ENCODE measurements at regions of chr9 and their contacts with region 1.

Region 1: DNA sequence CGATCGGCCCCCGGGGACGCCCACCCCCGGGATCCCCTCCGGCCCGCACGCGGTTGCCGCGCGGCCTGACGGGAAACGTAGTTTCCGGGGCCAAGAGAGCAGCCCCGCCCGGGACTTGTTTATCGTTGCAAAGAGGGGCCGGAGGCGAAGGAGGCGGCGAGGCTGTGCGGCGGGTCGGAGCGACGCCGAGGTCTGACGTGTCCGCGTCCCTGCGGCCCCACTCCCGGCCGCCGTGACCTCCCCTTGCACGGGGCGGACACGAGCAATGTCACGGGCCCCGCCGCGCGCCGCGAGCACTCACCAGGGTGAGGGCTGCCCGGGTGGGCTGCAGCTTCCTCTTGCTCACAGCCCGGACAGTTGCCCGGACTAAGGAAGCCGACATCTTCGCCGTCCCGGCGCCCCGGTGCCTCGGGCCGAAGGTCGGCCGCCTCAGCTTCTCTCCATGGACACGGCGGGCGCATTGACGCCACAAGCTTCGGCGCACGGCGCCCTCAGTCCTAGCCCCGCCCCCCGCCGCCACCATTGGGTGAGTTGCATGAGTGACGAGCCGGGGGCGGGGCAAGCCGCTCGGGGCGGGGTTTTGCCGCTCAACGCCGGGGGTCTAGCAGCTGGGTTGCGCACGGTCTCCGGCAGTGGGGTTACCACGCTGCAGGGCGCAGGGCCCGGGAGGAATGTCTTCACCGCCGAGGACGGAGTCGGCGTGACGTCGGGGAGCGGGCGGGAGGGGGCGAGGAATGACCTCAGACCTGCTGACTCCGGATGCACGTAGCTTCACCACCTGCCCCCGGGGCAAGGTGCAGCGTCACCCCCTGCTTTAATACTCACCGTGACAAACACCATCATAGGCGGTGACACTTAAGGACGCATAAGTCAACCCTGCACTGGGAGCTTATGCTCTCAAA is at the start of gene ISCA1:
- DNase-seq: peak; percentile 87
- ATAC-seq: peak; percentile 94
- H3K4me3 ChIP-seq: peak within 1 kb of the TSS; percentile 92
- H3K27ac ChIP-seq: peak within 1 kb of the TSS; percentile 88
- H3K4me1 ChIP-seq: peaks cover 4% of the 10 kb centered on the region
- H3K27me3 ChIP-seq: no peaks in the 10 kb centered on the region
- CTCF ChIP-seq: no peak
- POLR2A ChIP-seq: peak; percentile 96
- RAD21 ChIP-seq: no peak
- total RNA-seq, gene ISCA1: 14.7 and 26.4 TPM in 2 replicates

Region 2: DNA sequence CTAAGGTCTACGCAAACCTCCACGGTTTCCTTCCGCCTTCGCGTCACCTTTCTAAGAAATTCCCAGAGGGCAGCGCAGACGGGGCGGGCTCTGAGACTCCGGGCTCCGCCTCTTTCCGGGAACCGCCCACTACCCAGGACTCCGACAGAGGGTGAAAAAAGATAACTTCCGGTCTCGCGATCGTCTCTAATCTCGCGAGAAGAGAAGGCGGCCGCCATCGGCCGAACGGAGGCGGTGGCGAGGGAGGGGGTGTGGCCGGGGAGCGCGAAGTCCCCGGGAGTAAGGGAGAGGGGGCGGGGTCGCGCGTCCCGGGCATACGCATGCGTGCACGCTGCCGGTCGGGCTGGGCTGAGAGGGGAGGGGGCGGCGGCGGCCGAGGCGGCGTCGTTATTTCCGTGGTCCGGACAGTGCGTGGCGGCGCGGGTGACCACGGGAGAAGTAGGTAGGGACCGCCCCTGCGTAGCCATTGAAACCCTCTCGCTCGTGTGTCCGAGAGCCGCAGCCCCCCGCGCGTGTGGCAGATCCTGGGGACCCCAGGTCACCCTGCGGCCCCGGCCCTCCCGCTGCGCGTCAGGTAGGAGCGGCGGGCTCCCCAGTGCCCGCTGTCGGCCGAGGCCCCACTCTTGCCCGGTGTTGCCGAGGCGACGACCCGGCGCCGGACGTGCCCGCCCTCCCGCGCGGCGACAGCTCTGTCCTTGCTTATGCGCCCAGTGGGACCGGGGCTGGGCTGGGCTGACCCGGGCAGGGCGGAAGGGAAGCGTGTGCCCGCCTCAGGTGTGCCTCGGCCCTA is 341.3 kb before region 1 on chr9 and contains the start of gene NAA35:
- CTCF ChIA-PET with region 1: no interaction called
- POLR2A ChIA-PET with region 1: no interaction called
- dilution Hi-C with region 1: no loop called
- in situ Hi-C with region 1: no loop called
- intact Hi-C with region 1: loop called (anchors 5 kb)
- DNase-seq: peak; percentile 97
- ATAC-seq: peak; percentile 95
- H3K4me3 ChIP-seq: peak within 1 kb of the TSS; percentile 83
- H3K27ac ChIP-seq: peak within 1 kb of the TSS; percentile 66
- H3K4me1 ChIP-seq: no peaks in the 10 kb centered on the region
- H3K27me3 ChIP-seq: no peaks in the 10 kb centered on the region
- CTCF ChIP-seq: no peak
- POLR2A ChIP-seq: 0 out of 2 replicates have a peak, but pooled peaks have one; percentile 59
- RAD21 ChIP-seq: no peak
- total RNA-seq, gene NAA35: 16.5 and 23.9 TPM in 2 replicates

Region 3: GRCh38 chr9:86230858-86231257 is 51.5 kb before region 1 on chr9:
- CTCF ChIA-PET with region 1: no interaction called
- POLR2A ChIA-PET with region 1: no interaction called
- dilution Hi-C with region 1: no loop called
- in situ Hi-C with region 1: no loop called
- intact Hi-C with region 1: no loop called
- DNase-seq: no peak
- ATAC-seq: no peak
- H3K4me3 ChIP-seq: no peak overlapping the region
- H3K27ac ChIP-seq: no peak overlapping the region
- H3K4me1 ChIP-seq: no peaks in the 10 kb centered on the region
- H3K27me3 ChIP-seq: no peaks in the 10 kb centered on the region
- CTCF ChIP-seq: no peak
- POLR2A ChIP-seq: no peak
- RAD21 ChIP-seq: no peak

Region 4: DNA sequence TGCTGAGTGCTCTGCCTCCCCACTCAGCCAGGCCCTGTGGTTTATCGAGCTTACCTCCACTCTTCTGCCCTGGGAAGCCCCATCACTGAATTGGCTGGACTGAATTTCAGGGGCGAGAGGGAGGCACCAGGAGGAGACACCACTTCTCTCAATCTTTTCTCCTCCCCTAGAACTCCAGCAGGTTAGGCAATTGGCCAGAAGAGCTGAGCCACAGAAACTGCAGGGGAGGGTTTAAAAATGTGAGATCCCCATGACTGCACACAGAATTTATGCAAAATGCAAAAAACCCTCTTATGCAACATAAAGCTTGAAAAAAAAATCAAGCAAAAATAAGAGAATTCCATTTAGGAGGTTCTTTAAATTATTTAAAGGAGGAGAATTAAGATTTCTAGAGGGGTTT is 42.0 kb after region 1 on chr9:
- CTCF ChIA-PET with region 1: no interaction called
- POLR2A ChIA-PET with region 1: no interaction called
- dilution Hi-C with region 1: no loop called
- in situ Hi-C with region 1: no loop called
- intact Hi-C with region 1: loop called (anchors 5 kb)
- DNase-seq: peak; percentile 75
- ATAC-seq: peak; percentile 30; the same call in 1 of the 2 replicates
- H3K4me3 ChIP-seq: no peak overlapping the region
- H3K27ac ChIP-seq: peak overlapping the region; percentile 41; the same call in 1 of the 2 replicates
- H3K4me1 ChIP-seq: peaks cover 15% of the 10 kb centered on the region
- H3K27me3 ChIP-seq: no peaks in the 10 kb centered on the region
- CTCF ChIP-seq: no peak
- POLR2A ChIP-seq: no peak
- RAD21 ChIP-seq: no peak

Region 5: GRCh38 chr9:86405926-86406325 is 123.6 kb after region 1 on chr9:
- CTCF ChIA-PET with region 1: no interaction called
- POLR2A ChIA-PET with region 1: no interaction called
- dilution Hi-C with region 1: no loop called
- in situ Hi-C with region 1: no loop called
- intact Hi-C with region 1: loop called (anchors 5 kb)
- DNase-seq: peak; percentile 95
- ATAC-seq: peak; percentile 68
- H3K4me3 ChIP-seq: peak overlapping the region; percentile 8; the same call in 1 of the 2 replicates
- H3K27ac ChIP-seq: peak overlapping the region; percentile 55
- H3K4me1 ChIP-seq: peaks cover 17% of the 10 kb centered on the region
- H3K27me3 ChIP-seq: no peaks in the 10 kb centered on the region
- CTCF ChIP-seq: no peak
- POLR2A ChIP-seq: no peak
- RAD21 ChIP-seq: no peak

Measured in IMR-90 (cell line).